Activated CD8-positive, alpha-beta T cell treated with anti-CD3 and anti-CD28 coated beads, Interleukin-2, amount 10 ng/mL, durations not matched to agents 7 days and 5 days (primary cell): ENCODE measurements at regions of chr12 and their contacts with region 1.

Region 1: DNA sequence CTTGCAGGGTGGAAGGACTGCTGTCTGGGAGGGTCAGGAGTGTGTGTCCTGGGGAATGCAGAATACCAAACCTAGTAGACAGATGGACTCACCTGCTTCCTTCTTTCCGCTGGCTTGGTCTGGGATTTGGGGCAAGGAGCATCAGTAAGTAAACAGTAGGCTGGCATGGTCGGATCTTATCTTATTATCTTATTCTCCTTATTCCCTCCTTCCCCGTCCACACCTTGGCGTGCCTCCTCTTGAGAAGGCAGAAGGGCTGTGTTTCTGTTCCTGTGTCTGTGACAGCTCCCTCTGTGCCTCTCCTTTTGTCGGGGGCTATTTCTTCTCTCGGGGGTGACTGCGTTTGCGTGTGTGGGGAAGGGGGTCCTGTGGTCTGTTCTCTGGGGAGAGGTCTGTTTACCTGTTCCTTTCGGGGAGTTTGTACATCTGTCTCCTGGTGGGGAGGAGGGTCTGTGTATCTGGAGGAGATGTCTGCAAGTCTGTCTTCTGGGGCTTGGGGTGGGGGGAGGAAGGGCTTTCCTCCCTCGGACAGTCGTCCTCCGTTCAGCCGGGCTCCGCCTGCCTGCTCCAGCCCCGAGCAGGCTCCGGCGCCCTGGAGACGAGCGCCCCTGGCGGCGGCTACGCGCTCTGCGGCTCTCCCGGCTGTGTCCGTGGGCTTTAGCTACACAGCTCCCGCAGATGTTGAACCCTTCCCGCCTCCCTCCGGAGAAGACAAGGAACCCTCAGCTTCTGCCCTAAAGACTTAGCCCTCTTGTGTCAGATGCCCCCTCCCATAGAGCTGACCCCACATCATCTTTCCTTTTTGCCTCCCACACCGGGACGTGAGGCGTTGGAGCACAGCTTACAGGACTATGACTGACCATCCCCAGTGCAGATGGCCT is 4.3 kb downstream of the KRT86 start:
- DNase-seq: peak; percentile 80
- ATAC-seq: peak; percentile 100
- H3K4me3 Mint-ChIP-seq: no peak overlapping the region
- H3K27ac Mint-ChIP-seq: no peak overlapping the region
- H3K4me1 Mint-ChIP-seq: peaks cover 21% of the 10 kb centered on the region
- H3K27me3 Mint-ChIP-seq: peaks cover 44% of the 10 kb centered on the region

Region 2: DNA sequence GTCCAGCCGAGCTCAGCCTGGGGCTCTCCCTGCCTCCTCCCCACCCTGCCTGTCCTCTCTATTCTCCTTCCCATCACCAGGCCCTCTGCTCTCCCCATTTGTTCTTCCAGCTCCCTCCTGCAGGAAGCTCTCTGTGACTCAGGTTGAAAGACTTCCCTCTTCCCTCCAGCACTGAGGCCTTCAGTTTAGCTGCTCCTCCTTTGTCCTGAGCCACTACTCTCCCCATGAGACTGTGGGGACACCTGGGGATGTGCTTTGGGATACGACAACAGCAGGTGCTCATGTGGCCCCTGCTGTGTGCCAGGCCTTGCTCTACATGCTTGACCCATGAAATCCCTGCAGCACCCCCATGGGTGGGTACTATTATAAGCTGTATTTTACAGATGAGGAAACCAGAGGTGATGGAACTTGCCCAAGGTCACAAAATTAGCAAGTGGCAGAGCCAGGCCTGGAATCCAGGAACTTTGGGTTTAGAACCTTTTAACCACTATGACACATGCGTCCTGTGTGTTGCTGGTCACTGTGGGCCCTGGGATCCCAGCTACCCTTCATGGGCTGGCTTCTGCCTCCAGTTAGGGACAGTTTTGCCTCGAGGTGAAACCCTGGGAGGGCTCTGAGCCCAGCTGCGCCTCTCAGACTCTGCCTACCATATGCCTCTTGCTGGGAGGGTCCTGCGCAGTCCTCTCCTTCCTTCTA is 92.5 kb before region 1 on chr12:
- CTCF ChIA-PET with region 1: interaction called, 10 read pairs
- POLR2A ChIA-PET with region 1: no interaction called
- DNase-seq: no peak
- ATAC-seq: no peak
- H3K4me3 Mint-ChIP-seq: no peak overlapping the region
- H3K27ac Mint-ChIP-seq: no peak overlapping the region
- H3K4me1 Mint-ChIP-seq: peaks cover 16% of the 10 kb centered on the region
- H3K27me3 Mint-ChIP-seq: peaks cover 11% of the 10 kb centered on the region

Region 3: GRCh38 chr12:52221912-52222457 is 56.8 kb before region 1 on chr12:
- CTCF ChIA-PET with region 1: interaction called, 89 read pairs
- POLR2A ChIA-PET with region 1: no interaction called
- DNase-seq: peak; percentile 86
- ATAC-seq: peak; percentile 87
- H3K4me3 Mint-ChIP-seq: no peak overlapping the region
- H3K27ac Mint-ChIP-seq: no peak overlapping the region
- H3K4me1 Mint-ChIP-seq: peaks cover 9% of the 10 kb centered on the region
- H3K27me3 Mint-ChIP-seq: peaks cover 58% of the 10 kb centered on the region

Region 4: GRCh38 chr12:52243856-52244614 is 34.7 kb before region 1 on chr12:
- CTCF ChIA-PET with region 1: interaction called, 33 read pairs
- POLR2A ChIA-PET with region 1: no interaction called
- DNase-seq: peak; percentile 75
- ATAC-seq: peak; percentile 93
- H3K4me3 Mint-ChIP-seq: peak overlapping the region; percentile 69
- H3K27ac Mint-ChIP-seq: peak overlapping the region; percentile 91
- H3K4me1 Mint-ChIP-seq: peaks cover 67% of the 10 kb centered on the region
- H3K27me3 Mint-ChIP-seq: peaks cover 5% of the 10 kb centered on the region

Region 5: GRCh38 chr12:52258335-52258901 is 20.4 kb before region 1 on chr12:
- CTCF ChIA-PET with region 1: interaction called, 24 read pairs
- POLR2A ChIA-PET with region 1: no interaction called
- DNase-seq: no peak
- ATAC-seq: no peak
- H3K4me3 Mint-ChIP-seq: no peak overlapping the region
- H3K27ac Mint-ChIP-seq: no peak overlapping the region
- H3K4me1 Mint-ChIP-seq: peaks cover 57% of the 10 kb centered on the region
- H3K27me3 Mint-ChIP-seq: peaks cover 40% of the 10 kb centered on the region

Region 6: DNA sequence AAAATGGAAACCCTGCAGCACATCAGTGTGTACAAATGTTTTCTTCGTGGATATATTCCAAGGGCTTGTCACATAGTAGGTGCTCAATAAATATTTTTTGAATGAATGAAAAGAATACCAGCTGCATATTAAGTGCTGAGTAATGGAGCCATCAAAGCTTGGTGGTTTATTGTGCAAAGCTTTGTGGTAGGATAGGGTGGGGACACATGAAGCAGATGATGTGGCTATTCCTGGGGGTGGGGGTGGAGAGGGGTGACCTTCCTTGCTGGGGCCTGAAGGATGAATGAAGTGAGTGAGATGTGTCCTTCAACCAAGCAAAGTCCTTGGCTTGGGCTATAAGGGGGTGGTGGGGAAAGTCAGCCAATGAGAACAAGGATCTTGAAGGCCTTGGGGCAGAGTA is 16.9 kb after region 1 on chr12:
- CTCF ChIA-PET with region 1: interaction called, 35 read pairs
- POLR2A ChIA-PET with region 1: no interaction called
- DNase-seq: no peak
- ATAC-seq: no peak
- H3K4me3 Mint-ChIP-seq: no peak overlapping the region
- H3K27ac Mint-ChIP-seq: no peak overlapping the region
- H3K4me1 Mint-ChIP-seq: peaks cover 20% of the 10 kb centered on the region
- H3K27me3 Mint-ChIP-seq: peaks cover 64% of the 10 kb centered on the region

Region 7: GRCh38 chr12:52327052-52327829 is 48.5 kb after region 1 on chr12:
- CTCF ChIA-PET with region 1: interaction called, 11 read pairs
- POLR2A ChIA-PET with region 1: no interaction called
- DNase-seq: peak; percentile 88
- ATAC-seq: peak; percentile 98
- H3K4me3 Mint-ChIP-seq: no peak overlapping the region
- H3K27ac Mint-ChIP-seq: no peak overlapping the region
- H3K4me1 Mint-ChIP-seq: peaks cover 16% of the 10 kb centered on the region
- H3K27me3 Mint-ChIP-seq: peaks cover 28% of the 10 kb centered on the region